Aorta (tissue), 5 donors: ENCODE measurements at regions of chr17 and their contacts with region 1.

Region 1: GRCh38 chr17:81821603-81822311 is 11.3 kb downstream of the MCRIP1 start:
- DNase-seq: peak; percentile 88 to 93
- ATAC-seq: peak; percentile 74
- H3K4me3 ChIP-seq: no peak overlapping the region
- H3K27ac ChIP-seq: peak overlapping the region in 1 of 2 donors; percentile 11
- H3K4me1 ChIP-seq: no peaks in the 10 kb centered on the region
- H3K27me3 ChIP-seq: no peaks in the 10 kb centered on the region

Region 2: GRCh38 chr17:81860756-81861518 is 39.2 kb after region 1 on chr17:
- intact Hi-C with region 1: loop called in 1 of 2 experiments (anchors 5 kb)
- DNase-seq: peak; percentile 99 to 100
- ATAC-seq: peak; percentile 99
- H3K4me3 ChIP-seq: peak overlapping the region; percentile 53 to 63
- H3K27ac ChIP-seq: peak overlapping the region; percentile 46 to 80
- H3K4me1 ChIP-seq: peaks cover 3 to 4% of the 10 kb centered on the region in 2 donors
- H3K27me3 ChIP-seq: peaks cover 0 to 2% of the 10 kb centered on the region in 2 donors